Pancreas (tissue), 10 donors: ENCODE measurements at regions of chr4 and their contacts with region 1.

Region 1: GRCh38 chr4:72302981-72303704 is 265.9 kb downstream of the ADAMTS3 start:
- DNase-seq: peak in 4 of 6 donors; percentile 18 to 46 (median 36)
- ATAC-seq: peak; percentile 71 to 89 (median 88)
- H3K4me3 ChIP-seq: no peak overlapping the region
- H3K27ac ChIP-seq: no peak overlapping the region
- H3K4me1 ChIP-seq: no peaks in the 10 kb centered on the region
- H3K27me3 ChIP-seq: no peaks in the 10 kb centered on the region
- CTCF ChIP-seq: peak; percentile 58 to 73 (median 66)

Region 2: DNA sequence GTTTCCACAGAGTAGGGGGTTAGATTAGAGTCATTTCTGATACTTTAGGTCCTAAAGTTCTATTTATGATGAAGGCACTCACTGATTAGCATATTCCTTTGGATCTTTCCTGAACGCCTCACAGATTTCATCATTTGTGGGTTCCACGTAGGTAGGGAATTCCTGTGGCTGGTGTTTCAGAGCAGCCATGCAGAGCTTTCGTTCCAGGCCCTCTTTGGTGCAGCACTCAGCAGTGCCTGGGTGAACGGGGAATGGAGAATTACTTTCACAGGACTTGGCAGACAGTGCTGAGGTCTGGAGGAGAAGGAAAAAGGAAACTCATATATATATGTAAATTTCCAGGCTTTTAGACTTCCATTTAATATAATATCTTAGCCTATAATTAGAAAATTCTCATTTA is 537.8 kb before region 1 on chr4:
- intact Hi-C with region 1: loop called in 1 of 3 experiments (anchors 10 kb)
- DNase-seq: no peak
- ATAC-seq: no peak
- H3K4me3 ChIP-seq: no peak overlapping the region
- H3K27ac ChIP-seq: no peak overlapping the region
- H3K4me1 ChIP-seq: no peaks in the 10 kb centered on the region
- H3K27me3 ChIP-seq: peaks cover 0 to 4% (median 0%) of the 10 kb centered on the region in 4 donors
- CTCF ChIP-seq: no peak

Region 3: GRCh38 chr4:72094059-72094797 is 208.9 kb before region 1 on chr4:
- intact Hi-C with region 1: no loop called
- DNase-seq: peak in 2 of 6 donors; percentile 6 to 25
- ATAC-seq: no peak
- H3K4me3 ChIP-seq: no peak overlapping the region
- H3K27ac ChIP-seq: no peak overlapping the region
- H3K4me1 ChIP-seq: no peaks in the 10 kb centered on the region
- H3K27me3 ChIP-seq: no peaks in the 10 kb centered on the region
- CTCF ChIP-seq: no peak

Region 4: DNA sequence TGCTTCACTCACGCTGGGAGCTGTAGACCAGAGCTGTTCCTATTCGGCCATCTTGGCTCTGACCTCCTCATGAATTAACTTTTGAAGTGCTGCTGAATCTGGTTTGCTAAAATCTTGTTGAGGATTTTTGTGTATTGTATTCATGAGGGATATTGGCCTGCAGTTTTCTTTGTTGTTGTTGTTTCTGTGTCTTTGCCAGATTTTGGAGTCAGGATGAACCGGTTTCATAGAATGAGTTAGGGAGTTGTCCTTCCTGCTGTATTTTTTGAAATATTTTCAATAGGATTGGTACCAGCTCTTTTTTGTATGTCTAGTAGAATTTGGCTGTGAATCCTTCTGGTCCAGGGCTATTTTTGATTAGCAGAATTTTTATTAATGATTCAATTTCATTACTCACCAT is 133.3 kb before region 1 on chr4:
- intact Hi-C with region 1: no loop called
- DNase-seq: no peak
- ATAC-seq: no peak
- H3K4me3 ChIP-seq: no peak overlapping the region
- H3K27ac ChIP-seq: no peak overlapping the region
- H3K4me1 ChIP-seq: no peaks in the 10 kb centered on the region
- H3K27me3 ChIP-seq: no peaks in the 10 kb centered on the region
- CTCF ChIP-seq: no peak